ENCODE measurements at regions of chr4 and their contacts with region 1.

Region 1: DNA sequence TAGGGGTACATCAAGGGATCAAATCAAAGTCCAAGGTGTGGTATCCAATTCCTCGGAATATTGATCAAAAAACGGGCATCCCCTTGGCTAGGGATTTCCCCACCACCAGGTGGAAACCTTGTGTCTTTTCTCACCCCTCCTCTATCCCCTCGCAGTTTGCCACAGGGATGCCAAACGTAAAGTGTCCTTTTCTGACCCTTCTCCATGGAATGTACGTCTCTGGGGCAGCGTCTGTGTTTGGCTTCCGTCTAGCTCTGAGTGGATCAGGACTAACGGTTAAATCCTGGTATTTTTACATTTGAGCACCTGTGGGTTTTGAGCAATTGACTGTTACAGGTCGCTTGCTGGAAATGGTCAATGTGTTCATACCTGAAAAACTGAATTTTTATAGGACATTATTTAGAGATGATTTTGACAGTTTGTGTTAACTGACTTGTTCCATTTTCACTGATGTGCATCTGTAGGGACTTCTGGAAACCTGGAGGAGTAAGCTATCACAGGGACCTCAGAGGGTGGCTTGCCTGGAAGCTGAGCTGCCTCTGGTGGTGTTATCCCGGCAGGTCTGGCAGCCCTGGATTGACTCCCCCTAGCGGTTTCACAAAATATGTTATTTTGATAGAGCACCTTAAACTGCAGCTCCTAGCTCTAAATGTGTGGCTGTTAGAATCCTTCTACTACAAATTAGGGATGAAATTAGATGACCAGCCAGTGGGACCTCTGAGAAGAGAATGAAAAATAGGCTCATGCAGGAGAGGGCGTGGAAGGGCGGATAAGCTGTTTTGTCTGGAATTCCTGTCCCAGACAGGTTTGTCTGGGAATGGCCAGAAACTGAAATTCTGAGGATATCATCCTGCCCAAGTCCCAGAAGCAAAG is 8.8 kb upstream of the MGST2 start:
- DNase-seq: peak; percentile 57
- ATAC-seq: peak; percentile 88
- H3K4me3 Mint-ChIP-seq: peak overlapping the region; percentile 43
- H3K27ac Mint-ChIP-seq: no peak overlapping the region
- H3K4me1 Mint-ChIP-seq: peaks cover 20% of the 10 kb centered on the region
- H3K27me3 Mint-ChIP-seq: peaks cover 7% of the 10 kb centered on the region
- CTCF ChIP-seq: peak; percentile 59

Region 2: DNA sequence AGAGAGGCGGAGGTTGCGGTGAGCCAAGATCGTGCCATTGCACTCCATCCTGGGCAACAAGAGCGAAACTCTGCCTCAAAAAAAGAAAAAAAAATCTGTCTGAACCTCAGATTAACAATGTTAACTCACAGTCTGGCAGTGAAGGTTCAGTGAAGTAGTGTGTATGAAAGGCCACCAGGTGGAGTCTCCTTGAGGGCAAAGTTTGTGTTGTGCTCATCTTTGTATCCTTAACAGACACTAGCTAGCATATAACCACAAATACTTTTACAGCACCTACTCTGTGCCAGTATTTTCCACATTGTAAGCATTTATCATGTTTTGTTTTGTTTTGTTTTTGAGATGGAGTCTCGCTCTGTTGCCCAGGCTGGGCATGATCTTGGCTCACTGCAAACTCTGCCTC is 37.2 kb before region 1 on chr4:
- CTCF ChIA-PET with region 1: interaction called, 27 read pairs
- POLR2A ChIA-PET with region 1: no interaction called
- DNase-seq: no peak
- ATAC-seq: peak; percentile 88
- H3K4me3 Mint-ChIP-seq: no peak overlapping the region
- H3K27ac Mint-ChIP-seq: no peak overlapping the region
- H3K4me1 Mint-ChIP-seq: peaks cover 19% of the 10 kb centered on the region
- H3K27me3 Mint-ChIP-seq: peaks cover 60% of the 10 kb centered on the region
- CTCF ChIP-seq: peak; percentile 40; the same call in 1 of the 2 replicates

Region 3: GRCh38 chr4:139633661-139634060 is 23.2 kb before region 1 on chr4:
- CTCF ChIA-PET with region 1: interaction called, 31 read pairs
- POLR2A ChIA-PET with region 1: no interaction called
- DNase-seq: peak; percentile 48
- ATAC-seq: peak; percentile 90
- H3K4me3 Mint-ChIP-seq: peak overlapping the region; percentile 71
- H3K27ac Mint-ChIP-seq: no peak overlapping the region
- H3K4me1 Mint-ChIP-seq: peaks cover 22% of the 10 kb centered on the region
- H3K27me3 Mint-ChIP-seq: peaks cover 75% of the 10 kb centered on the region
- CTCF ChIP-seq: 0 out of 2 replicates have a peak, but pooled peaks have one; percentile 22

Region 4: DNA sequence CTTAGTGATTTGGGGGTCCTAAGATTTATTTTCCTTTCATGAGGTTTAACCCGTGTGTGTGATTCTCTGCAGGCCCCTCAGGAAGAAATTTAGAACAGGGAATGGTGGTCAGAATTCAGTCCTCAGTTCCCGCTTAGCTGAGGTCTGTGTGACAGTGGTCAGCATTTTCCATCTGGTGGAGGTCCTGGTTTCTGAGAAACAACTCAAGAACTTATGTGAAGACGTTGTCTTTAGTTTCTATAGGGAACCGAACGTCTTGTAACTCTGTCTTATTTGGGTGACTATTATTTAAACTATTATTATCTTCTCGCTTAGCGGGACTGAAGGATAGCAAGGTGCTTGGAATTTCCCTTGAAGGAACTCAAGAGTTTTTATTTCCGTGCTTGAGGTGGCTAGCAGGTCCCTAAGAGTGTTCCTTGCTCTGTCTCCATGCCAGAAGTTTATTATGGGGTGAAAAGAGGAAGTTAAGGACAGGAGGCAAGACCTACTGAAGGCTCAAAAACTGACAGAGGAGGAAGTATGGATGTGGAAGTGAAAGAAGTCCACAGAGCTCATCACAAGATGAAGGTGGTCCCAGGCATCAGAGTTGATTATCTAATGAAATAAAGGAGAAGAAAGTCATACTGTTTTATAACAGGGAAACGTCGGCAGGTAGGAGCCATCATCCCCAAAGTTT is 18.2 kb after region 1 on chr4:
- CTCF ChIA-PET with region 1: interaction called, 24 read pairs
- POLR2A ChIA-PET with region 1: no interaction called
- DNase-seq: no peak
- ATAC-seq: no peak
- H3K4me3 Mint-ChIP-seq: no peak overlapping the region
- H3K27ac Mint-ChIP-seq: no peak overlapping the region
- H3K4me1 Mint-ChIP-seq: peaks cover 24% of the 10 kb centered on the region
- H3K27me3 Mint-ChIP-seq: no peaks in the 10 kb centered on the region
- CTCF ChIP-seq: no peak

Region 5: DNA sequence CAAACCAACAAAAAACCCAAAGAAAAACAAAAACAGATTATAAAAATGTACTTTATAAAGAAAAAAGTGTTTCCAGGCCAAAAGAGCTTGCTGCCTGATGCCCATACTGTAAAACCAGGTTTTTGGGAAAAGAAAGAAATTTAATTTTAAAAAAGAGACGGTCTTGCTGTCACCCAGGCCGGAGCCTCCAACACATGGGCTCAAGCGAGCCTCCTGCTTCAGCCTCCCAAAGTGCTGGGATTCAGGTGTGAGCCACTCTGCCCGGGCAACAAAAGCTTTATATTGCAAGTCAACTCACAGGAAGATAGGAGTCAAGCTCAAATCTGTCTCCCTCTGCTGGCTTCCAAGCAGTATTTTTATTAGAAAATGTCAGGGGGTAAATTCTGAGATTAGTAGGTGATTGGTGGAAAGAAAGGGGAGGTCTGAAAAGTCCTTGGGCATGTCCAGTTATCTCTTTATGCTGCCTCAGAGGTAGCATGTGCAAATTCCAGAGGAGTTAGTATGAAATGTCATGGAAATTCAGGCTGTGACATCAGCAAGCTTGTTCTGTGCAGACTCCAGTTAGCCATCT is 48.1 kb after region 1 on chr4:
- CTCF ChIA-PET with region 1: interaction called, 21 read pairs
- POLR2A ChIA-PET with region 1: no interaction called
- DNase-seq: no peak
- ATAC-seq: no peak
- H3K4me3 Mint-ChIP-seq: no peak overlapping the region
- H3K27ac Mint-ChIP-seq: no peak overlapping the region
- H3K4me1 Mint-ChIP-seq: no peaks in the 10 kb centered on the region
- H3K27me3 Mint-ChIP-seq: no peaks in the 10 kb centered on the region
- CTCF ChIP-seq: no peak

Region 6: GRCh38 chr4:140049024-140049848 is 392.4 kb after region 1 on chr4:
- CTCF ChIA-PET with region 1: interaction called, 14 read pairs
- POLR2A ChIA-PET with region 1: no interaction called
- DNase-seq: peak; percentile 55
- ATAC-seq: peak; percentile 84
- H3K4me3 Mint-ChIP-seq: peak overlapping the region; percentile 58
- H3K27ac Mint-ChIP-seq: peak overlapping the region; percentile 98
- H3K4me1 Mint-ChIP-seq: peaks cover 63% of the 10 kb centered on the region
- H3K27me3 Mint-ChIP-seq: no peaks in the 10 kb centered on the region
- CTCF ChIP-seq: no peak

Measured in WTC11 (cell line).